ENCODE measurements at regions of chr17 and their contacts with region 1.

Region 1: DNA sequence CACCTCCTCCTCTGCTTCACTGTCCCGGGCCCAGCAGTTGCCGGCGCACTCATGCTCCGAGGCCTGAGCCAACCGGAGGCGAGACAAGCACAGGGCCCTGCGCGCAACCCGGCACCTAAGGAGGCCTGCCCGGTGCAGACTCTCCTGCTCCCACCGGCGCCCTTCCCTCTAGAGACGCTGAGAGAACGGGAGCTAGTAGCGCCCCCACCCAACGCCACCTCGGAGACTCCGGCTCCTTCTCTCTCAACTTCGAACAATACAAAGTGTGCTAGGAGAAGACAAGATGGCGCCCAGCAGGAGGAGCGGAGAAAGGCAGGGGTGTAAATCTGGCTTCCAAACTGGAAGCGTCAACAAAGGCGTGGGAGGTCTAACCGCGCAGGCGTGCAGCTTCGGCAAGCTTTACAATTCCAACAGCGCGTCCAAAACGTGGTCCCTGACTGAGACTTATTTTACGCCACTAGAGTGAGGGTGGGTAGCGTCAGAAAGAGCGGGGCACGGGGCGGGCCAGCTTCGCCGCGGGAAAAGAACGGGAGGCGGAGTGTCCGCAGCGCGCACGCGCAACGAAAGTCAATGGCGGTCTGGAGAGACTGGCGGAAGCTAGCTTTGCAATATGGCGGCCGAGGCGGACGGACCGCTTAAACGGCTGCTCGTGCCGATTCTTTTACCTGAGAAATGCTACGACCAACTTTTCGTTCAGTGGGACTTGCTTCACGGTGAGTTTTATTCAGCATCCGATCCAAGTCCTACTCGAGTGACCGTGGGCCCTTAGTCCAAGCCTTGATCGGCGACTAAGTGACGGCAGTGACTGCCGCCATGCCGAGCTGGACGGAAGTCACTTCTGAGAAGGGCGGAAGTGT is at the start of gene MPDU1:
- DNase-seq: peak; percentile 97
- ATAC-seq: peak; percentile 82
- H3K4me3 Mint-ChIP-seq: peak within 1 kb of the TSS; percentile 98
- H3K27ac Mint-ChIP-seq: peak within 1 kb of the TSS; percentile 100
- H3K4me1 Mint-ChIP-seq: peaks cover 69% of the 10 kb centered on the region
- H3K27me3 Mint-ChIP-seq: no peaks in the 10 kb centered on the region
- total RNA-seq, gene MPDU1: 69.0 to 70.4 TPM

Region 2: GRCh38 chr17:7572588-7573323 is 10.7 kb before region 1 on chr17:
- CTCF ChIA-PET with region 1: interaction called, 4 read pairs
- POLR2A ChIA-PET with region 1: interaction called, 105 read pairs
- DNase-seq: no peak
- ATAC-seq: peak; percentile 13
- H3K4me3 Mint-ChIP-seq: peak overlapping the region; percentile 93
- H3K27ac Mint-ChIP-seq: peak overlapping the region; percentile 100
- H3K4me1 Mint-ChIP-seq: peaks cover 62% of the 10 kb centered on the region
- H3K27me3 Mint-ChIP-seq: no peaks in the 10 kb centered on the region

Region 3: GRCh38 chr17:7614422-7615264 is 31.2 kb after region 1 on chr17 and contains the start of gene FXR2:
- CTCF ChIA-PET with region 1: interaction called, 15 read pairs
- POLR2A ChIA-PET with region 1: interaction called, 4 read pairs
- DNase-seq: peak; percentile 100
- ATAC-seq: peak; percentile 97
- H3K4me3 Mint-ChIP-seq: peak within 1 kb of the TSS; percentile 83
- H3K27ac Mint-ChIP-seq: peak within 1 kb of the TSS; percentile 85
- H3K4me1 Mint-ChIP-seq: peaks cover 25% of the 10 kb centered on the region
- H3K27me3 Mint-ChIP-seq: peaks cover 2% of the 10 kb centered on the region
- total RNA-seq, gene FXR2: 27.6 to 31.8 TPM